Mammary epithelial cell (primary cell): ENCODE measurements at regions of chr10 and their contacts with region 1.

Region 1: GRCh38 chr10:90857635-90858460 is at the start of gene HTR7:
- DNase-seq: peak; percentile 52
- H3K4me3 ChIP-seq: peak within 1 kb of the TSS; percentile 57 to 98 (median 95)
- H3K27ac ChIP-seq: peak within 1 kb of the TSS; percentile 90
- H3K4me1 ChIP-seq: peaks cover 22% of the 10 kb centered on the region
- H3K27me3 ChIP-seq: no peaks in the 10 kb centered on the region
- CTCF ChIP-seq: peak; percentile 9 to 50
- total RNA-seq, gene HTR7: 20.2 to 24.1 TPM

Region 2: DNA sequence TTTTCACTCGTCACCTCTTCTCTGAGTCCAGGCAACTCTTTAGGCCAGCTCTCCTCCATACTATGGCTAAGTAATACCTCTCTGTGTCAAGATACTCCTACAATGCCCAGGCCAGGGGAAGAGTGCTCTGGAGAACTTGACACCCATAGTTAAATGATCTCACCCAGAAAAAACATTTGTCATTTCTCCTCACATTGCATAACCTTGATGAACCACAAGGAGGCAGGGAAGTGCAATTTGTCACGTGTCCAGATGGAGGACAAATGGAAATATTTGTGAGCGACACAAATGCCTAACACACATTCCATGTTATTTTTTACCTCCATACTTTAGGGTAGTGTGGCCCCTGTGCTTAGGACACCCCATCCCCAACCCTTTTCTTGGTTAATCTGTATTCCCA is 78.3 kb before region 1 on chr10:
- CTCF ChIA-PET with region 1: no interaction called
- dilution Hi-C with region 1: no loop called
- in situ Hi-C with region 1: no loop called
- intact Hi-C with region 1: loop called (anchors 1 kb)
- DNase-seq: peak; percentile 35
- H3K4me3 ChIP-seq: no peak overlapping the region
- H3K27ac ChIP-seq: no peak overlapping the region
- H3K4me1 ChIP-seq: peaks cover 25% of the 10 kb centered on the region
- H3K27me3 ChIP-seq: no peaks in the 10 kb centered on the region
- CTCF ChIP-seq: peak; percentile 44 to 50

Region 3: DNA sequence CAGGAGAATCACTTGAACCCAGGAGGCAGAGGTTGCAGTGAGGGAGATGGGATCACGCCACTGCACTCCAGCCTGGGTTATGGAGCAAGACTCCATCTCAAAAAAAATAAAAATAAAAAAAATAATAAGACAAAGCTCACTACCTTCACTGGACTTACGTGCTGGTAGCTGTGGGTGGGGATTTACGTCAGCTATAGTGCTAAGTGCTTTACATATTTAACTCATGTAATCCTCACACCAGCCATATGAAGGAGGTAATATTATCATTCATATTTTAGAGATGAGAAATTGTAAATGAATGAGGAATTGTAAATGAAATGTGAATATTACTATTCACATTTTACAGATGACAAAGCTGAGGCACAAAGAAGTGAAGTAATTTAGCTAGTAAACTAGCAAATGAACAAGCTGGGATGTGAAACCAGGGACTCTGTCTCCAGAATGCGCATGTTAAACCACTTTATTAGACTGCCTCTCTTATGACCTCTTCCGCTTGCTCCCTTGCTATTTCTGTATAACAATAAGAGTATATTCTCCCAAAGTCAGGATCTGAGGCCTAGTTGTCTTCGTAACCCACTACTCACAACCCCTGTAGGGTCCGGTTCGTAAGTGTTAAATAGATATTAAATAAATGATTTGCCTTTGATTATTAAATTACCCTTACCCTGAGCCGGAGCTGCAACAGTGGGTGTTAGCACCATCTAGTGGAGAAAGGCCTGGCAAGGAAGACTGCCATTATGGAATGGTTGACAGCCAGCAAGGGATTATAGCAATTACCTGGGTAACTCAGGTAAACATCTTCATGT is 70.3 kb before region 1 on chr10:
- CTCF ChIA-PET with region 1: no interaction called
- dilution Hi-C with region 1: no loop called
- in situ Hi-C with region 1: loop called in 1 of 2 experiments (anchors 10 kb)
- intact Hi-C with region 1: loop called (anchors 1 kb)
- DNase-seq: peak; percentile 27
- H3K4me3 ChIP-seq: no peak overlapping the region
- H3K27ac ChIP-seq: no peak overlapping the region
- H3K4me1 ChIP-seq: no peaks in the 10 kb centered on the region
- H3K27me3 ChIP-seq: no peaks in the 10 kb centered on the region
- CTCF ChIP-seq: peak; percentile 84 to 97

Region 4: GRCh38 chr10:90798482-90798881 is 59.4 kb before region 1 on chr10:
- CTCF ChIA-PET with region 1: no interaction called
- dilution Hi-C with region 1: no loop called
- in situ Hi-C with region 1: loop called in 1 of 2 experiments (anchors 10 kb)
- intact Hi-C with region 1: no loop called
- DNase-seq: no peak
- H3K4me3 ChIP-seq: no peak overlapping the region
- H3K27ac ChIP-seq: no peak overlapping the region
- H3K4me1 ChIP-seq: no peaks in the 10 kb centered on the region
- H3K27me3 ChIP-seq: no peaks in the 10 kb centered on the region
- CTCF ChIP-seq: no peak

Region 5: GRCh38 chr10:90817128-90817889 is 40.5 kb before region 1 on chr10:
- CTCF ChIA-PET with region 1: no interaction called
- dilution Hi-C with region 1: no loop called
- in situ Hi-C with region 1: no loop called
- intact Hi-C with region 1: loop called (anchors 1 kb)
- DNase-seq: peak; percentile 86
- H3K4me3 ChIP-seq: peak overlapping the region in 2 of 3 experiments; percentile 19 to 24
- H3K27ac ChIP-seq: peak overlapping the region; percentile 86
- H3K4me1 ChIP-seq: peaks cover 71% of the 10 kb centered on the region
- H3K27me3 ChIP-seq: no peaks in the 10 kb centered on the region
- CTCF ChIP-seq: no peak

Region 6: DNA sequence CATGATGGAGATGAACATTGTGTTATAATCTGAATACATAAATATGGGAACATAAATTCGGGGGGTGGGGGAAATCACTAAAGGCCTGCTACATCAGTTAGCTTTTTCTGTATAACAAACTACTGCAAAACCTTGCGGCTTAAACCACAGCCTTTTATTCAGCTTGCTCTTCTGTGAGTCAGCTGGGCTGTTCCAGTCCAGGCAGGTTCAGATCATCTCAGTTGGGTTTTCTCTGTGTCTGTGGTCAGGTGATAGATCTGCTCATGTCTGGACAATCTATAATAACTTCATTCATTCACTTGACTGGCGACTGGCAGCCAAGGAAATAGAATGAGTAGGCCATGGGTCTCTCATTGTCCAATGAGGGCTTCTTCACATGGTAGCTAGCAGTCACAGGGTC is 23.5 kb before region 1 on chr10:
- CTCF ChIA-PET with region 1: no interaction called
- dilution Hi-C with region 1: no loop called
- in situ Hi-C with region 1: no loop called
- intact Hi-C with region 1: loop called (anchors 2 kb)
- DNase-seq: peak; percentile 98
- H3K4me3 ChIP-seq: no peak overlapping the region
- H3K27ac ChIP-seq: peak overlapping the region; percentile 76
- H3K4me1 ChIP-seq: peaks cover 43% of the 10 kb centered on the region
- H3K27me3 ChIP-seq: no peaks in the 10 kb centered on the region
- CTCF ChIP-seq: no peak

Region 7: DNA sequence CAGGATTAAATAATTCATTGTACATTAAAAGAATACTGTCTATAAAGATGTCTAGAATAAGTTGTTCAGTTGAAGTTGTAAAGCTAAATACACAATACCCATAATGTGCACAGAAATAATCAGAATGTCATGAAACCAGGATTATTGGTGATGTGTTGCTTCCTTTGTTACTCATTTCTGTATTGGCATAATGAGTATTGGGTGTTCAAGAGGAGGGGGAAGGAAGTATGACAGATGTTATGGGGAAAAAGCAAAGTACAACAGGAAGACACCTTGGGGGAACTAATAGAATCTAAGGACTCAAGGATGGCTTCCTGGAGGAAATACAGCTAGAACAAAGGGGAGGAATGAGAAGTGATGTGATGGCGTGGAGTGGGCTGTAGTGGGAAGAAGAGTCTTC is 48.1 kb after region 1 on chr10:
- CTCF ChIA-PET with region 1: no interaction called
- dilution Hi-C with region 1: no loop called
- in situ Hi-C with region 1: no loop called
- intact Hi-C with region 1: no loop called
- DNase-seq: no peak
- H3K4me3 ChIP-seq: no peak overlapping the region
- H3K27ac ChIP-seq: no peak overlapping the region
- H3K4me1 ChIP-seq: no peaks in the 10 kb centered on the region
- H3K27me3 ChIP-seq: no peaks in the 10 kb centered on the region
- CTCF ChIP-seq: no peak

Region 8: DNA sequence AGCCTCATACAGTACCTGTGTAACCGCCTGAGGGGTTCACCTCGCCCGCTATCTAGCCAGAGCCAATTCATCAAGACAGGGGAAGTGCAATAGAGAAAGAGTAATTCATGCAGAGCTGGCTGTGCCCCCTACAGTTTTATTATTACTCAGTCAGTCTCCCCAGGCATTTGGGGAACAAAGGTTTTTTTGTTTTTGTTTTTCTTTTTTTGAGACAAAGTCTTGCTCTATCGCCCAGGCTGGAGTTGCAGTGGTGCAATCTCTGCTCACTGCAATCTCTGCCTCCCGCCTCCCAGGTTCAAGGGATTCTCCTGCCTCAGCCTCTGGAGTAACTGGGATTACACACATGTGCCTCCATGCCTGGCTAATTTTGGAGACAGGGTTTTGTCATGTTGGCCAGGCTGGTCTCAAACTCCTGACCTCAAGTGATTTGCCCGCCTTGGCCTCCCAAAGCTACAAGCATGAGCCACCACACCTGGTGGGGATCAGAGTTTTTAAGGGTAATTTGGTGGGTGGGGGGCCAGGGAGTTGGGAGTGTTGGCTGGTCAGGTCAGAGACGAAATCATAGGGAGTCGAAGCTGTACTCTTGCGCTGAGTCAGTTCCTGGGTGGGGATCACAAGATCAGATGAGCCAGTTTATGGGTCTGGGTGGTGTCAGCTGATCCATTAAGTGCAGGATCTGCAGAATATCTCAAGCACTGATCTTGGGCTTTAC is 1549.6 kb after region 1 on chr10:
- CTCF ChIA-PET with region 1: no interaction called
- dilution Hi-C with region 1: no loop called
- in situ Hi-C with region 1: no loop called
- intact Hi-C with region 1: no loop called
- DNase-seq: peak; percentile 62
- H3K4me3 ChIP-seq: no peak overlapping the region
- H3K27ac ChIP-seq: no peak overlapping the region
- H3K4me1 ChIP-seq: peaks cover 11% of the 10 kb centered on the region
- H3K27me3 ChIP-seq: no peaks in the 10 kb centered on the region
- CTCF ChIP-seq: no peak